ENCODE measurements at regions of chr2 and their contacts with region 1.

Region 1: DNA sequence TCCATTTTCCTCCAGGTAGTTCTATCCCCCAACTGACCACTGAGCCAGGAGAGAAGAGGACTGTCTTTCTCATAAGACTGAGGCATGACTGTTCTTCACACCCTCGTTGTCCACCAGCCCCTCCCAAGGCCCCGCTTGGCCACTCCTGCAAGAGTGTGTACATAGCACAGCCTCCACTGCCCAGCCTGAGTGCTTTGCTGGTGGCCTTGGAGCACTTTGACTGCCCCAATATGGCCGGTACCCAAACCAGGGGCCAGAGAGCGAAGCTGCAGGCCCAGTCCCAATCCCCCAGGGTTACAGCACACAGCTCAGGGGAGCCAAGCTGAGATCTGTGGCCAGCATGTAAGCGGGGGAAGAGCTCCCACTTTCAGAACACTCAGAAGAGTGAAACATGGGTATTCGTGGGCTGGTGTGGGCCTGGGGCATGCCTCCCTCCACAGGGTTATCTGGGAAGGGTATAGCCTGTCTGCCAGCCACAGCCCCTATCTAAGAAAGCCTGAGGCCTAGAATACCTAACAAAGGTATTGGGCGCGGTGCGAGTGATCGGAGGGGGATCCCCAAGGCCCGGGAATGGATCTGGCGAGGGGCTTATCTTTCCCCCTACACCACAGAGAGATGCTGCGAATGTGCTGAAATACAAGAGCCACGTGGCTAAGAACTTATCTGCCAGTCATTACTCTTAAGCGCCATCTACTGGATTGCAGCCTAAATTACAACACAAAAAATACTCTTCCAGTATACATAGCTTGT is 163.8 kb downstream of the WDPCP start:
- DNase-seq: peak; percentile 16
- ATAC-seq: peak; percentile 76
- H3K4me3 Mint-ChIP-seq: no peak overlapping the region
- H3K27ac Mint-ChIP-seq: no peak overlapping the region
- H3K4me1 Mint-ChIP-seq: peaks cover 3% of the 10 kb centered on the region
- H3K27me3 Mint-ChIP-seq: no peaks in the 10 kb centered on the region

Region 2: DNA sequence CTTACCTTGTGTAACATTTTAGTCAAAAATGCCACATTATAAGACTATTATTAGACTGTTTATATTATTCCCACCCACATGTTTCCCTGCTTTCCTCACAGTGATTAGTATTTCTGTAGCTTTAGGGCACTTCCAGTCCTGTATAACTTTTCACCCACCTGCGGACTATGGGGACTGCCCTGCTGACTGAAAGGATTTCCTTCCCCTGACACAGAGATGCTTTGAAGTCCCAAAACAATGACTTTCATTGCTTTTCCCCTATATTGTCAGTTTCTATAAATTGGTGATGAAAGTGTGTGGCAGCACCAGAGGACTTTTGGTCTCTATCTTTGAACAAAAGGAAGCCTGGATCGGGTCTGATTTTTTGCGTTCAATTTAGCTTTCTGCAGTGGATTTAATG is 432.9 kb before region 1 on chr2:
- CTCF ChIA-PET with region 1: no interaction called
- POLR2A ChIA-PET with region 1: no interaction called
- intact Hi-C with region 1: no loop called
- DNase-seq: no peak
- ATAC-seq: no peak
- H3K4me3 Mint-ChIP-seq: no peak overlapping the region
- H3K27ac Mint-ChIP-seq: no peak overlapping the region
- H3K4me1 Mint-ChIP-seq: no peaks in the 10 kb centered on the region
- H3K27me3 Mint-ChIP-seq: no peaks in the 10 kb centered on the region

Region 3: GRCh38 chr2:63050334-63051041 is 374.0 kb before region 1 on chr2 and contains the start of gene OTX1:
- CTCF ChIA-PET with region 1: no interaction called
- POLR2A ChIA-PET with region 1: no interaction called
- intact Hi-C with region 1: loop called in 1 of 2 experiments (anchors 5 kb)
- DNase-seq: peak; percentile 80
- ATAC-seq: peak; percentile 80
- H3K4me3 Mint-ChIP-seq: peak within 1 kb of the TSS; percentile 75
- H3K27ac Mint-ChIP-seq: peak within 1 kb of the TSS; percentile 47
- H3K4me1 Mint-ChIP-seq: peaks cover 60% of the 10 kb centered on the region
- H3K27me3 Mint-ChIP-seq: peaks cover 78% of the 10 kb centered on the region
- total RNA-seq, gene OTX1: not detected

Region 4: GRCh38 chr2:63408530-63408929 is 16.0 kb before region 1 on chr2:
- CTCF ChIA-PET with region 1: interaction called, 13 read pairs
- POLR2A ChIA-PET with region 1: interaction called, 3 read pairs
- intact Hi-C with region 1: no loop called
- DNase-seq: no peak
- ATAC-seq: no peak
- H3K4me3 Mint-ChIP-seq: no peak overlapping the region
- H3K27ac Mint-ChIP-seq: no peak overlapping the region
- H3K4me1 Mint-ChIP-seq: no peaks in the 10 kb centered on the region
- H3K27me3 Mint-ChIP-seq: no peaks in the 10 kb centered on the region

Region 5: GRCh38 chr2:63438181-63438580 is 13.7 kb after region 1 on chr2:
- CTCF ChIA-PET with region 1: interaction called, 12 read pairs
- POLR2A ChIA-PET with region 1: no interaction called
- intact Hi-C with region 1: no loop called
- DNase-seq: no peak
- ATAC-seq: no peak
- H3K4me3 Mint-ChIP-seq: no peak overlapping the region
- H3K27ac Mint-ChIP-seq: no peak overlapping the region
- H3K4me1 Mint-ChIP-seq: peaks cover 5% of the 10 kb centered on the region
- H3K27me3 Mint-ChIP-seq: no peaks in the 10 kb centered on the region

Region 6: GRCh38 chr2:64359892-64360657 is 935.6 kb after region 1 on chr2:
- CTCF ChIA-PET with region 1: no interaction called
- POLR2A ChIA-PET with region 1: no interaction called
- intact Hi-C with region 1: no loop called
- DNase-seq: peak; percentile 82
- ATAC-seq: peak; percentile 98
- H3K4me3 Mint-ChIP-seq: no peak overlapping the region
- H3K27ac Mint-ChIP-seq: no peak overlapping the region
- H3K4me1 Mint-ChIP-seq: peaks cover 8% of the 10 kb centered on the region
- H3K27me3 Mint-ChIP-seq: peaks cover 22% of the 10 kb centered on the region

Measured in activated CD4-positive, alpha-beta T cell treated with anti-CD3 and anti-CD28 coated beads for 36 hours (primary cell).